ENCODE measurements at regions of chr4 and their contacts with region 1.

Region 1: GRCh38 chr4:88591787-88592599 is at the start of gene HERC3:
- DNase-seq: peak; percentile 70 to 96
- H3K4me3 ChIP-seq: peak within 1 kb of the TSS; percentile 88 to 95
- H3K27ac ChIP-seq: peak within 1 kb of the TSS; percentile 93 to 96
- H3K4me1 ChIP-seq: peaks cover 2 to 12% of the 10 kb centered on the region in 2 donors
- H3K27me3 ChIP-seq: no peaks in the 10 kb centered on the region
- CTCF ChIP-seq: no peak
- total RNA-seq, gene HERC3: 16.2 TPM

Region 2: DNA sequence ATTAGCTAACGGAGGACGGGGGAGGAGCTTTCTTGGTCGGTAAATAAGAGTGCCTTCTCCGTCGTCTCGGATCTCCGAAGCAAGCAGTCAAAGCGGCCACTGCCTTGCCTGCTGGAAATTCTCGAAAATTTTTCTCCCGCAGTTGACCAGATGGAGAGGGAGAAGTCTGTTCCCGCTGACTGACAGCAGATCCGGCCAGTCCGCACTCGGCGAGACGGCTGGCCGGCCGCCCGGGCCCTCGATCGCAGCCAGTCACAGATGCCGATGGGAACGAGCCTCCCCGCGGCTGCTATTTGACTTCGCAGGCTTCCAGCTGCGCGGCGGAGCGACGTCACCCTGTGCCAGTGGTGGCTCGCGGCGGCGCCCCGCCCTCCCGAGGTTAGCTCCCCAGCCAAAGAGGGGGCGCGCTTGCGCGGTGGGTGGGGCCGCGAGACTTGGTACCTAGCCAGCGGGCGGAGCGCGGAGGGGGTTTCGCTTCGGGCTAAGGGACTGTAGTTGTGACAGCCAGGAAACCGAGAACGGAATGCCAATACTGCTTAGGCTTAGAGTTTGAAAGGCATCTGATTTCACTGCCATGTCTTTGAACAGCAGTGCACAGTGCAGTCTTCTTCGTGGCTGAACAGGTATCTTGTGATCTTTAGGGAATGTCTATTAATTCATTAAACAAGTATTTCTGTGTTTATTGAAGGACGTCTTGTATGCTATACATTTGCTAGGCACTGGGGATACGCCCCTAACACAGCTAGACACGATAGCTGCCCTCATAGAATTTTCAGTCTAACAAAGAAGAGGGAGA is 307.4 kb before region 1 on chr4 and contains the start of gene PPM1K:
- intact Hi-C with region 1: loop called (anchors 5 kb)
- DNase-seq: peak; percentile 99 to 100
- H3K4me3 ChIP-seq: peak within 1 kb of the TSS; percentile 69 to 83
- H3K27ac ChIP-seq: peak within 1 kb of the TSS; percentile 98
- H3K4me1 ChIP-seq: peaks cover 11 to 30% of the 10 kb centered on the region in 2 donors
- H3K27me3 ChIP-seq: no peaks in the 10 kb centered on the region
- CTCF ChIP-seq: peak in 1 of 3 experiments; percentile 16
- total RNA-seq, gene PPM1K: 17.0 TPM

Region 3: GRCh38 chr4:88523325-88524129 is 68.5 kb before region 1 on chr4 and contains the start of gene PYURF:
- intact Hi-C with region 1: loop called (anchors 1 kb)
- DNase-seq: peak; percentile 88 to 99
- H3K4me3 ChIP-seq: peak within 1 kb of the TSS; percentile 87 to 95
- H3K27ac ChIP-seq: peak within 1 kb of the TSS; percentile 87 to 94
- H3K4me1 ChIP-seq: peaks cover 0 to 16% of the 10 kb centered on the region in 2 donors
- H3K27me3 ChIP-seq: no peaks in the 10 kb centered on the region
- CTCF ChIP-seq: peak in 1 of 3 experiments; percentile 5
- total RNA-seq, gene PYURF: 91.6 TPM

Region 4: GRCh38 chr4:88629826-88630225 is 37.8 kb after region 1 on chr4:
- intact Hi-C with region 1: loop called (anchors 5 kb)
- DNase-seq: no peak
- H3K4me3 ChIP-seq: no peak overlapping the region
- H3K27ac ChIP-seq: no peak overlapping the region
- H3K4me1 ChIP-seq: peaks cover 0 to 11% of the 10 kb centered on the region in 2 donors
- H3K27me3 ChIP-seq: no peaks in the 10 kb centered on the region
- CTCF ChIP-seq: no peak

Region 5: GRCh38 chr4:88823058-88823919 is 231.3 kb after region 1 on chr4:
- intact Hi-C with region 1: loop called (anchors 10 kb)
- DNase-seq: peak; percentile 76 to 93
- H3K4me3 ChIP-seq: peak overlapping the region; percentile 57 to 64
- H3K27ac ChIP-seq: peak overlapping the region; percentile 77 to 85
- H3K4me1 ChIP-seq: peaks cover 0 to 29% of the 10 kb centered on the region in 2 donors
- H3K27me3 ChIP-seq: no peaks in the 10 kb centered on the region
- CTCF ChIP-seq: no peak